Caco-2 (cell line): ENCODE measurements at regions of chr17 and their contacts with region 1.

Region 1: DNA sequence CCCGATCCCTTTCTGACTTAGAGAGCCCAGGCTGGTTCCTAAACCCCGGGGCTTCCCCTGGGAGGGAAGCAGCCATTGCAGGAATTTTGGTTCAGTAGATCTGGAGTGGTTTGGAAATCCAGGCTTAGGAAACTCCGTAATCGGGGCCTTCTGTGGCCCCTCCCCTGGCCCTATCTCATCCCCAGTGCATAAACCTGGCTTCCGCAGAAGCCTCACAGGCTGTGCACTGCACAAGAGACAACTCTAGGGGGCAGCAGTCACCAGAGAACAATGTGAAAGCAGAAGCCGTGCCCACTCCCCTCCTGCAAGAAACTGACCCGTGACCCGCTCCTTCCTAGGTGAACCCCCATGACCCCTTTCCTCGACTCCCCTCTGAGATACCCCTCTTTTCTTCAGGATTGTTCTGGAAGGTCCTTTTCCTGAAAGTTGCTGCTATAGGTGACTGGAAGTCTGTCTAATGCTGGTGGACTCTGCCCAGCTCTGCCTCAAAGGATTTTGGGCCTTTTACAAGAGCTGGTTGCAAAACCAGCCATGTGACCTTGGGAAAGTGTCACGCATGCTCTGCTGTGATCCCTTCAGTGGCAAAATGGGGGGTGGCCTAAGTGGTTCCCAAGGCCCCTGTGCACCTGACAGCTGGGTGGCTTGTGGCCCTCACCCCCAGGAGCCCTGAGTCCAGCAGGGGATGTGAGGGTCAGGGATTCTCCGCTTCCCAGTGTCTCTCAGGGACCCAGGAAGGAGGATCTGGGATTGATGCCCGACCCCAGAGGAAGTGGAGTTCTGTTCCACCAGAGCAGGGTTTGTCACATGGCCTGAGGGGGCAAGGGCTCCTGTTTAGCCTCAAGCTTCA is 14.4 kb downstream of the GUCY2D start:
- DNase-seq: peak; percentile 60 to 68
- H3K4me3 ChIP-seq: peak overlapping the region; percentile 66
- H3K4me3 Mint-ChIP-seq: peak overlapping the region; percentile 74
- H3K27ac Mint-ChIP-seq: no peak overlapping the region
- H3K4me1 ChIP-seq: peaks cover 9% of the 10 kb centered on the region
- H3K4me1 Mint-ChIP-seq: peaks cover 6% of the 10 kb centered on the region
- H3K27me3 ChIP-seq: no peaks in the 10 kb centered on the region
- H3K27me3 Mint-ChIP-seq: no peaks in the 10 kb centered on the region
- CTCF ChIP-seq: peak; percentile 47 to 53

Region 2: GRCh38 chr17:7922845-7923628 is 93.8 kb before region 1 on chr17:
- CTCF ChIA-PET with region 1: no interaction called
- POLR2A ChIA-PET with region 1: no interaction called
- intact Hi-C with region 1: no loop called
- DNase-seq: peak; percentile 74 to 76
- H3K4me3 ChIP-seq: peak overlapping the region; percentile 30
- H3K4me3 Mint-ChIP-seq: peak overlapping the region; percentile 70
- H3K27ac Mint-ChIP-seq: peak overlapping the region; percentile 47
- H3K4me1 ChIP-seq: no peaks in the 10 kb centered on the region
- H3K4me1 Mint-ChIP-seq: no peaks in the 10 kb centered on the region
- H3K27me3 ChIP-seq: no peaks in the 10 kb centered on the region
- H3K27me3 Mint-ChIP-seq: no peaks in the 10 kb centered on the region
- CTCF ChIP-seq: peak in 1 of 2 experiments; percentile 5

Region 3: DNA sequence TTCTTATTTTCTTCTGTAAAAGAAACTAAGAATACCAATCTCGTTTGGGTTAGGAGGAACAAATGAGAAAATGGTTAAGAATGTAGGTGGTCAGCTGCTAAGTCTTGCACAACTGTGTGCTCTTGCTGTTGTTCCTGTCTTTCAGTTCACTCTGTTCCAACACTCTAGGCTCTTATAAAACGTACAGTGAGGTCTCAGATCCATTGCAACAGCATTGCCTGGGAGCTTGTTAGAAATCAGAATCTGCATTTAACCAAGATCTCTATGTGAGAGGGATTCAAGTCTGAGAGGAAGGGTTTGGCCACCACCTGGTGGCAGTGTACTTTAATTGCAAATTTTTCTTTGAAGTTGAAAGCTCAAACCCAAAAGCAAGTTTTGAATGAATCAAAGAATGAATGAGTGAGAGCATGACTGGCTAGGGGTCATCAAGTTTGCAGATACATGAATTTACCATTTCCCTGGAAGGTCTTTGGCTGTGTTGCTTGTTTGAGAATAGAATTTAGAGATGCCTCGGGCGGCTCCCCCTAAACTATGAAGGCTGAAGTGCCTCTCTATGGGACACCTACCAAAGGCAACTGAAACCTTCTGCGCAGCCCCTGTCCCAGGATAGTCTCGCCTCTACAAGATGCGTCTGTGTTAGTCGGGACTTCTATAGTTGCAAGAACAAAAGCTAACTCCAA is 24.5 kb after region 1 on chr17:
- CTCF ChIA-PET with region 1: interaction called, 24 read pairs
- POLR2A ChIA-PET with region 1: no interaction called
- intact Hi-C with region 1: loop called (anchors 1 kb)
- DNase-seq: peak in 1 of 2 experiments; percentile 39
- H3K4me3 ChIP-seq: no peak overlapping the region
- H3K4me3 Mint-ChIP-seq: no peak overlapping the region
- H3K27ac Mint-ChIP-seq: peak overlapping the region; percentile 42
- H3K4me1 ChIP-seq: peaks cover 7% of the 10 kb centered on the region
- H3K4me1 Mint-ChIP-seq: no peaks in the 10 kb centered on the region
- H3K27me3 ChIP-seq: no peaks in the 10 kb centered on the region
- H3K27me3 Mint-ChIP-seq: no peaks in the 10 kb centered on the region
- CTCF ChIP-seq: peak; percentile 25 to 32